A673 (cell line): ENCODE measurements at regions of chr13 and their contacts with region 1.

Region 1: GRCh38 chr13:27988520-27988919 is at the start of gene URAD:
- DNase-seq: no peak
- H3K4me3 ChIP-seq: no peak within 1 kb of the TSS
- H3K27ac ChIP-seq: no peak within 1 kb of the TSS
- H3K4me1 ChIP-seq: no peaks in the 10 kb centered on the region
- H3K27me3 ChIP-seq: peaks cover 24% of the 10 kb centered on the region
- CTCF ChIP-seq: no peak
- total RNA-seq, gene URAD: not detected in 2 replicates

Region 2: DNA sequence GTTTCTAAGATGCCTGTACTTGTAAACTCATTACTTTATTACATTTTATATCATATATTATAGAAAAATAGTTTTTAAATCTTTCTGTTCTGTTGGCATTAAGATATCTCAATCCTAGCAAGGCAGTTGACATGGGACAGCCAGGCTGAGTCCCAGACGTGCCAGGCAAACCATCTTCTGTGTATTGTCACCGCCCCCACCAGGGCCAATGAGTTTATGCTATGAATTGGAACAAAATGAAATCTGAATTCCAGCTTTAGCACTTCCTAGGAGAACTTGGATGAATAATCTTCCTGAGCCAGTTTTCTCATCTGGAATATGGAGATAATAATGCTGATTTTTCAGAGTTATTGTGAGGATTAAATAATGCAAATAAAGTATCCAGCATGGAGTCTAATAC is 276.1 kb before region 1 on chr13:
- CTCF ChIA-PET with region 1: no interaction called
- POLR2A ChIA-PET with region 1: no interaction called
- intact Hi-C with region 1: no loop called
- DNase-seq: peak; percentile 30
- H3K4me3 ChIP-seq: no peak overlapping the region
- H3K27ac ChIP-seq: no peak overlapping the region
- H3K4me1 ChIP-seq: no peaks in the 10 kb centered on the region
- H3K27me3 ChIP-seq: peaks cover 35% of the 10 kb centered on the region
- CTCF ChIP-seq: peak; percentile 46

Region 3: GRCh38 chr13:28089065-28089464 is 100.5 kb after region 1 on chr13:
- CTCF ChIA-PET with region 1: no interaction called
- POLR2A ChIA-PET with region 1: interaction called, 17 read pairs
- intact Hi-C with region 1: no loop called
- DNase-seq: no peak
- H3K4me3 ChIP-seq: no peak overlapping the region
- H3K27ac ChIP-seq: no peak overlapping the region
- H3K4me1 ChIP-seq: no peaks in the 10 kb centered on the region
- H3K27me3 ChIP-seq: peaks cover 10% of the 10 kb centered on the region
- CTCF ChIP-seq: no peak